Activated T-helper 1 cell treated with anti-CD3 and anti-CD28 coated beads, Interleukin-12 subunit alpha, Interleukin-12 subunit beta, Interleukin-2, Interleukin-4 antibody, amounts not matched to agents 30 ng/mL and 10 ng/mL and 1 ng/mL, durations not matched to agents 14 hours and 24 hours and 36 hours (primary cell): ENCODE measurements at regions of chr10 and their contacts with region 1.

Region 1: DNA sequence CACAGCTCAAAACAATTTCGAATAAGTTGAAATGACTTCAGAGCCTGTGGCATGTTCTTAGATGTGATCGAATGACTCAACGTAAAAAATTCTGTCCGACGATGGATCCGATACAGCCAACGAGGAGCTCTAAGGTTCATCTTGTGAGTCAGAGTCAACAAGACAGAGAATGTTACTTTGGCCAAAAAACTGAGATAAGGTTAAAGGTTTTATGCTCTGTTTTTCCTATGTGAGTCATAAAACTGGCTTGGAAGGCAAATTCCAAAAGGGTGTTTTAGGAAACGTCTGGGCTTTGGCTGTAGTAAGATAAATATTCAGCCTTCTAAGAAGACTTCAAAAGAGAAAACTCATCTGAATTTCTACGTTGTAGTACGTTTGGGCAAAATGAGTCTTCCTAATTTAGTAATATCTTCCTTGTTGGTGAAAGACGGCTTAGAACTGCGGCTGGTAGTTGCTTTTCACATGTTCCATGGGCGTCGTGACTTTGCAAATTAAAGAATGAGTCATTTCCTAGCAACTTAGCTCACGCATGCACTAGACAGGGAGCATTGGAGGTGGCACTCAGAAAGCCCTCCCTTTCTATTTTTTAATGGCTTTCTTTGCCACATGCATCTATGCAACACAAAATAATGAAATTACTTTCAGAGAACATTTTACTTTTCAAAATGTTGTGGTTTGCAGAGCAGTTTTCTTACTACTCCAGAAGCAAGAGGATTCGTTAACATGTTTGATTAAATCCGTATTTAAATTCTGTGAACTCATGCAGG is 28.2 kb downstream of the PFKP start:
- DNase-seq: peak; percentile 57
- H3K4me3 Mint-ChIP-seq: peak overlapping the region; percentile 69
- H3K27ac Mint-ChIP-seq: peak overlapping the region; percentile 97
- H3K4me1 Mint-ChIP-seq: peaks cover 70% of the 10 kb centered on the region
- H3K27me3 Mint-ChIP-seq: no peaks in the 10 kb centered on the region

Region 2: DNA sequence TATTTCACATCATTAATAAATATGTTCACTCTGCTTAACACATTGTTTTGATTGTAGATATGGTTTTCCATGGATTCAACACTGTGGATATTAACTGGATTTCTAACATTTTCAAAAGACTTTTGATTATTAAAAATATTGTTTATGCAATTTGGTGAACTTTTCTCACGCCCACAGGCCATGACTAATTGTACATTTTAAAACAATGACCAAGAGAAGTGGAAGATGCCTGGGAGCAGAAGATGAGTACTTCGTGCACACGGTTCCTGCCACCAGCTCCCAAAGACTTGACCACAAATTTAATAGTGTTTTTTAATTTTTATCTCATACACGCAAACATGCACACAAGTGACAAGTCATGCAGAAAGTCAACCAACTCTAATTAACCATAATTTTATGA is 907.2 kb before region 1 on chr10:
- intact Hi-C with region 1: no loop called
- DNase-seq: no peak
- H3K4me3 Mint-ChIP-seq: no peak overlapping the region
- H3K27ac Mint-ChIP-seq: no peak overlapping the region
- H3K4me1 Mint-ChIP-seq: no peaks in the 10 kb centered on the region
- H3K27me3 Mint-ChIP-seq: no peaks in the 10 kb centered on the region

Region 3: GRCh38 chr10:2948127-2948854 is 147.3 kb before region 1 on chr10:
- intact Hi-C with region 1: loop called (anchors 1 kb)
- DNase-seq: no peak
- H3K4me3 Mint-ChIP-seq: peak overlapping the region; percentile 5
- H3K27ac Mint-ChIP-seq: peak overlapping the region; percentile 63
- H3K4me1 Mint-ChIP-seq: peaks cover 39% of the 10 kb centered on the region
- H3K27me3 Mint-ChIP-seq: peaks cover 16% of the 10 kb centered on the region

Region 4: DNA sequence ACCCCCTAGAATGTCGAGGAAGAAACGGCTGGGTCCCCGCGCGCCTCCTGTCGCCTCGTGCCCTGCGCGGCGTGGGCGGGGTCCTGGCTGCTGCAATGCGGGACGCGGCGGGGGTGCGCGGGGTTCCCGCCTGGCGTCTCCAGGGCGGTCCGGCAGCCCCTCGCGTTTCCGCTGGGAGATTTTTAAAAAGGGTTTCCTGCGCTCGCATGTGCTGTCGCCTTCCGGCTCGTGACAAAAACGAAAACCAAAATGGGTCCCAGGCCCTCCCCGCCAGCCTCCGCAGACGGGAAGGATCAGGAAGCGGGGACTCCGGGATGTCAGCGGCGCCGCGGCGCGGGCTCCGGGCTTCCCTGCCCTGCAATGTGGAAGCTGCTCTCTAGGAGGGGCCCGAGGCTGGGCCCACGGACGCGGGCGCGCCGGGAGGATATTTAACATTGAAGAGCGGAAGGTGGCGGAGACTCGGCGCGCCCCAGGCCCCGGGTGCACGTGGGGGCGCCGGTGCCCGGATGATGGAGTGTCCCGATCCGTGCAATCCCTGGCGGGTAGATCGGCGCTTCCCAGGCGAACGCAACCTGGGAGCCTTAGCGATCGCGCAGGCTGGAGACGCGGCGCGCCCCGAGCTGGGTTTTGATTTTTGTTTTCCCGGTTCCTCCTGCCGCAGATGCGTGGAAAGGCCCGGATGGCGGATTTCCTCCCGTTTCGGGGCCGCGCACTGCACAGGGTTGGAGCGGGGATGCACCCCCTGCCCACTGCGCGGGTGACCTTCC is 27.2 kb before region 1 on chr10:
- intact Hi-C with region 1: loop called (anchors 1 kb)
- DNase-seq: peak; percentile 58
- H3K4me3 Mint-ChIP-seq: peak overlapping the region; percentile 90
- H3K27ac Mint-ChIP-seq: peak overlapping the region; percentile 88
- H3K4me1 Mint-ChIP-seq: peaks cover 43% of the 10 kb centered on the region
- H3K27me3 Mint-ChIP-seq: peaks cover 16% of the 10 kb centered on the region

Region 5: DNA sequence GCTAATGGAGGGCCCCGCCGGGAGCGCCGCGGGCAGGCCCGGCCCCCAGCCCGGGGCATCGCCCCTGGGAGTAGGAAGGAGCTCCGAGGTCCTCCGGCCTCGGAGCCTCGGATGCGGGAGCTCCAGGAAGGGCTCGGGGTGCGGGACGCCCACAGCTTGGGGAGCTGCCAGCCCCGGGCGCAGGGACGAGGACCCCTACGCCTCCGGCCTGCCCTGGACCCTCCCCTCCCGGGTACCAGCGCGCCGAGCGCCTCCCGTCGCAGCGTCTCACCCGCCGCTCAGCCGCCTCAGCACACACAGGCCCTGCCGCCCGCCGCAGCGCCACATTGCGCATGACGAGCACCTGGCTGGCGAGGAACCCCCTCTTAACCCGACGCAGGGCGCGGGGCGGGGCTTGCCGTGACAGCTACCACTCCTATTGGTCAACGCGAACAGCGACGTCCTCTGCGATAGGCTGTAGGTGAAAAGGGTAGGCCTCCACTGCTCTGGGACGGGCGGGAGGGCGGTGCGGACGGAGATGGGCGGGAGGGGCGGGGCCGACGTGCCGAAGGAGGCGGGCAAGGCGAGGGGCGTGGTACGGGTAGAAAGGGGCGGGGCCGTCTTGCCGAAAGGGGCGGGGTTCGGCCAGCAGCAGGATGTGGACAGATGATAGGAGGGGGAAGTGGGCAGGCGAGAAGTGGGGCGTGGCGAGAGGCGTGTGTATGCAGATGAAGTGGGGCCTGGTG is 77.1 kb after region 1 on chr10 and contains the start of gene PITRM1:
- intact Hi-C with region 1: loop called (anchors 2 kb)
- DNase-seq: peak; percentile 99
- H3K4me3 Mint-ChIP-seq: peak within 1 kb of the TSS; percentile 90
- H3K27ac Mint-ChIP-seq: peak within 1 kb of the TSS; percentile 88
- H3K4me1 Mint-ChIP-seq: peaks cover 9% of the 10 kb centered on the region
- H3K27me3 Mint-ChIP-seq: peaks cover 20% of the 10 kb centered on the region
- total RNA-seq, gene PITRM1: 76.3 and 80.4 TPM in 2 replicates